HCT116 (cell line): ENCODE measurements at regions of chr4 and their contacts with region 1.

Region 1: DNA sequence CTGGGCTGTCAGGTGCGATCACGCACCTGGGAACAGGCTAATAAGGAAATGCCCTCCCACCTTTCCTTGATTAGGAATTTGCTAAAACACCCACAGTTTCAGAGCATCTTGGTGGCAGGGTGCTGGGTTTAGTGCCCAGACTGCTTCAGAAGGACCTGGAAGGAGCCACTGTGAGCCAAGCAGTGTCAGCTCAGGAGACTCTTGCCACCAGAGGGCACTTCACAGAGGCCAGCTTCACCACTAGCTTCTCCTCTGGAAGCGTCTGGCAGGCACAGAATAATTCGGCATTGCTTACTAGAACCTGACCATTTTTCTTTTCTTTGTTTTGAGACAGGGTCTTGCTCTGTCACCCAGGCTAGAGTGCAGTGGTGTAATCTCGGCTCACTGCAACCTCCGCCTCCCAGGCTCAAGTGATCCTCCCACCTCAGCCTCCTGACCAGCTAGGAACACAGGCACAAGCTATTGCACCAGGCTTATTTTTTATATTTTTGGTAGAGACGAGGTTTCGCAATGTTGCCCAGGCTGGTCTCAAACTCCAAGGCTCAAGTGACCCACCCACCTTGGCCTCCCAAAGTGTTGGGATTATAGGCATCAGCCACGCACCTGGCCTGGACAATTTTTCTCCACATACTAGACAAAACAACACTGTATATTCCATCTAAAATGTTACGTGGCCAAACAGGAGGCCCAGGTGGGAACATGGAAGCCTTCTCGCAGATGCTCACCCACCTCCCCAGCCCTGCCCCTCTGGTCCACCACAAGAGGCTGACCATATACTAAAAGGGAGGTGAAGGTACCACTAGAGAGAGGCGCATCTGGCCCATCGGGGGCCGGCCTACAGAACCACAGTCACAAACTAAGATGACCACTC is 14.1 kb downstream of the NOP14 start:
- DNase-seq: peak; percentile 22
- ATAC-seq: peak; percentile 83
- H3K4me3 ChIP-seq: no peak overlapping the region
- H3K27ac ChIP-seq: no peak overlapping the region
- H3K4me1 ChIP-seq: no peaks in the 10 kb centered on the region
- H3K27me3 ChIP-seq: no peaks in the 10 kb centered on the region
- CTCF ChIP-seq: peak; percentile 35 to 69 (median 53); a peak in 4 of 6 replicates
- POLR2A ChIP-seq: no peak
- RAD21 ChIP-seq: peak; percentile 40; the same call in 1 of the 2 replicates

Region 2: GRCh38 chr4:3037957-3038461 is 88.9 kb after region 1 on chr4:
- CTCF ChIA-PET with region 1: no interaction called
- POLR2A ChIA-PET with region 1: no interaction called
- RAD21 ChIA-PET with region 1: no interaction called
- intact Hi-C with region 1: loop called (anchors 1 kb)
- DNase-seq: no peak
- ATAC-seq: no peak
- H3K4me3 ChIP-seq: no peak overlapping the region
- H3K27ac ChIP-seq: no peak overlapping the region
- H3K4me1 ChIP-seq: peaks cover 0 to 10% of the 10 kb centered on the region in 2 experiments; a peak in 2 of 4 replicates
- H3K27me3 ChIP-seq: no peaks in the 10 kb centered on the region
- CTCF ChIP-seq: no peak
- POLR2A ChIP-seq: no peak
- RAD21 ChIP-seq: no peak